ENCODE measurements at regions of chr1 and their contacts with region 1.

Region 1: DNA sequence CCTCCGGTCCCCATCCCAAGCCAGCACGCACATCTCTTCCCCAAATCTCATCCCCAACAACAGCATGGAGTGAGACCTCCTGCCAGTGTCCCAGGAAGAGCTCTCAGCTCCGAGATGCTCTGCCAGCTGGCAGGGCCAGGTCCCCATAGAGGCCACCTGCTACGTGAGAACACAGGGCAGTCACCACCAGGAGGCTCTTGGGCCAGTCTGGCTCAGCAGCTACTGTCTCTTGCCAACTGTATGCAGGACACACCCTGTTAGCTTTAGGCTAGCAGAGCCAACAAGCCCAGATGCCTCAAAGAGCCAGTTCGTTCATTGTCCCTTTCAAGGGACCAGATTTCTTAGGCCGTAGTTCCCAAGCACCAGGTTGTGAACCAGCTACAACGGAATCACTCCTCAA is 36.9 kb downstream of the FBXO2 start:
- DNase-seq: no peak
- H3K4me3 ChIP-seq: no peak overlapping the region
- CTCF ChIP-seq: no peak

Region 2: GRCh38 chr1:11478571-11479374 is 138.5 kb before region 1 on chr1 and contains the start of gene DISP3:
- in situ Hi-C with region 1: loop called (anchors 25 kb)
- DNase-seq: no peak
- H3K4me3 ChIP-seq: peak within 1 kb of the TSS; percentile 45
- CTCF ChIP-seq: peak; percentile 47

Region 3: DNA sequence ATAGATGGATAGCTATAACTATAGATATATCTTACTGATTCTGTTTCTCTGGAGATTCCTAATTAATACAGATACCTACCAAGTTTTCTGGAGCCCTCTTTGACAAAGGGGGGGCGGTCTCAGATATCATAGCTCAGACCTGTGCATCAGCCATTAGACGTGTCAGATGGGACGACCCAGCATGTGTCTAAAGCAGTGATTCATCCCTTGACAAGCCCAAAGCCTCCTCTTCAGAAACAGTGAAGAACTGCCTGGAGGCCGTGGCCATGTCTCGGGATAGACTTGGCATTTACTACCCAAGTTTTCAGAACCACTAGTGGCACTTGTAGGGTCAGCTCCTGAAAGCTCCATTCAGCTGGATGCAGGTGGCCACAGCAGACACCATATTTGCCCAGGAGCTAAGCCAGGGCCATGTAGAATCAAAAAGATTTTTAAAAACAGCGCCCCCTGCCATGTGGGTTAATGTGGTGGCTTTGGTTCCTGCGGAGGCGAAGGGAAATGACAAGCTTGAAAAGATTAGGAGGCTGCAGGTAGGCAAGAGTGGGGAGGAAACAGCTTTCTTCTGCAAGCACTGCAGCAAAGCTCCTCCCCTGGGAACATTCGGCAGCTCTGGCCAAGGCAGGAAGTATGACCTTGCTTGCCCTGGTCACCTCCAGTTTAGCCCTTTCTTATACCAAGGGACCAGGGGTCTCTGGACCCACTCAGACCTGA is 45.2 kb before region 1 on chr1:
- in situ Hi-C with region 1: loop called (anchors 5 kb)
- DNase-seq: no peak
- H3K4me3 ChIP-seq: no peak overlapping the region
- CTCF ChIP-seq: no peak